Caco-2 (cell line): ENCODE measurements at regions of chr16 and their contacts with region 1.

Region 1: GRCh38 chr16:67521095-67521804 is 7.4 kb upstream of the RIPOR1 start:
- DNase-seq: peak; percentile 97 to 98
- H3K4me3 ChIP-seq: peak overlapping the region; percentile 53
- H3K4me3 Mint-ChIP-seq: peak overlapping the region; percentile 80
- H3K27ac Mint-ChIP-seq: peak overlapping the region; percentile 89
- H3K4me1 ChIP-seq: peaks cover 24% of the 10 kb centered on the region
- H3K4me1 Mint-ChIP-seq: peaks cover 32% of the 10 kb centered on the region
- H3K27me3 ChIP-seq: no peaks in the 10 kb centered on the region
- H3K27me3 Mint-ChIP-seq: no peaks in the 10 kb centered on the region
- CTCF ChIP-seq: peak; percentile 86 to 100

Region 2: GRCh38 chr16:67490335-67491096 is 30.7 kb before region 1 on chr16:
- CTCF ChIA-PET with region 1: interaction called, 42 read pairs
- POLR2A ChIA-PET with region 1: interaction called, 5 read pairs
- intact Hi-C with region 1: no loop called
- DNase-seq: no peak
- H3K4me3 ChIP-seq: no peak overlapping the region
- H3K4me3 Mint-ChIP-seq: no peak overlapping the region
- H3K27ac Mint-ChIP-seq: no peak overlapping the region
- H3K4me1 ChIP-seq: peaks cover 22% of the 10 kb centered on the region
- H3K4me1 Mint-ChIP-seq: peaks cover 23% of the 10 kb centered on the region
- H3K27me3 ChIP-seq: no peaks in the 10 kb centered on the region
- H3K27me3 Mint-ChIP-seq: no peaks in the 10 kb centered on the region
- CTCF ChIP-seq: no peak

Region 3: DNA sequence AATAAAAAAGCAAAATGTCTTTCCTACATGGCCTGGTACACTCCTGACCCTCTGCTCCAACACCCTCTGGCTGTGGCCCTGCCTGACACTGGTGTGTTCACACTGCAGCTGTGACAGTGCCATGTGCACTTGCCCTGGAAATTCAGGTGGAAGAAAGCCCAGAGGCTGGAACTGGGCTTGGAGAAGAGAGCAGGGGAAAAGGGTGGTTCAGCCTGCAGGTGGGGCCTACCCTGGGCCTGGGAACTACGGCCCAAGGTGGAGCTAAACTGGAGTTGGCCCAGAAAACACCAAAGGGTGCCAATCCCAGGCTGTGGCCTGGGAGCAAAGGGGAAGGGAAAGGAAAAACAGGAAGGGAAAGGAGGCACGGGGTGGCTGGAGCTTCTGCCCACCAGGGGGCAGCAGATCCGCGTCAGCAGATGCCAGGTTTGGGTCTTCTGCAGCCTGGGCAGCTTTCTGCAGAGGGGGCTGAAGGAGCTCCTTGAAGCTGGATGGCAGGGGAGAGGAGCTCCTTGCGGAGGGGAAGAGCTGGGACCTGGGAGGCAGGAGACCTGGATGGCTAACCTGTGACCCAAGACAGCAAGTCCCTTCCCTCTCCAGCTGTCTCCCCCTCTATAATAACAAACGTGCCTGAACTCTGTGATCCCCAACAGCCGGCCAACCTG is 25.6 kb after region 1 on chr16:
- CTCF ChIA-PET with region 1: interaction called, 74 read pairs
- POLR2A ChIA-PET with region 1: no interaction called
- intact Hi-C with region 1: loop called (anchors 1 kb)
- DNase-seq: peak; percentile 78 to 90
- H3K4me3 ChIP-seq: no peak overlapping the region
- H3K4me3 Mint-ChIP-seq: no peak overlapping the region
- H3K27ac Mint-ChIP-seq: peak overlapping the region; percentile 68
- H3K4me1 ChIP-seq: no peaks in the 10 kb centered on the region
- H3K4me1 Mint-ChIP-seq: peaks cover 5% of the 10 kb centered on the region
- H3K27me3 ChIP-seq: no peaks in the 10 kb centered on the region; the same call in 1 of the 2 replicates
- H3K27me3 Mint-ChIP-seq: no peaks in the 10 kb centered on the region
- CTCF ChIP-seq: peak; percentile 95 to 98

Region 4: GRCh38 chr16:67641779-67642708 is 120.8 kb after region 1 on chr16:
- CTCF ChIA-PET with region 1: interaction called, 45 read pairs
- POLR2A ChIA-PET with region 1: no interaction called
- intact Hi-C with region 1: loop called (anchors 2 kb)
- DNase-seq: no peak
- H3K4me3 ChIP-seq: no peak overlapping the region
- H3K4me3 Mint-ChIP-seq: no peak overlapping the region
- H3K27ac Mint-ChIP-seq: no peak overlapping the region
- H3K4me1 ChIP-seq: peaks cover 4% of the 10 kb centered on the region; the same call in 1 of the 2 replicates
- H3K4me1 Mint-ChIP-seq: no peaks in the 10 kb centered on the region
- H3K27me3 ChIP-seq: no peaks in the 10 kb centered on the region
- H3K27me3 Mint-ChIP-seq: no peaks in the 10 kb centered on the region
- CTCF ChIP-seq: no peak

Region 5: GRCh38 chr16:67667817-67668494 is 146.7 kb after region 1 on chr16:
- CTCF ChIA-PET with region 1: interaction called, 60 read pairs
- POLR2A ChIA-PET with region 1: no interaction called
- intact Hi-C with region 1: loop called (anchors 1 kb)
- DNase-seq: peak; percentile 88
- H3K4me3 ChIP-seq: no peak overlapping the region
- H3K4me3 Mint-ChIP-seq: peak overlapping the region; percentile 26
- H3K27ac Mint-ChIP-seq: no peak overlapping the region
- H3K4me1 ChIP-seq: peaks cover 4% of the 10 kb centered on the region
- H3K4me1 Mint-ChIP-seq: no peaks in the 10 kb centered on the region
- H3K27me3 ChIP-seq: no peaks in the 10 kb centered on the region
- H3K27me3 Mint-ChIP-seq: no peaks in the 10 kb centered on the region
- CTCF ChIP-seq: peak; percentile 72 to 95

Region 6: DNA sequence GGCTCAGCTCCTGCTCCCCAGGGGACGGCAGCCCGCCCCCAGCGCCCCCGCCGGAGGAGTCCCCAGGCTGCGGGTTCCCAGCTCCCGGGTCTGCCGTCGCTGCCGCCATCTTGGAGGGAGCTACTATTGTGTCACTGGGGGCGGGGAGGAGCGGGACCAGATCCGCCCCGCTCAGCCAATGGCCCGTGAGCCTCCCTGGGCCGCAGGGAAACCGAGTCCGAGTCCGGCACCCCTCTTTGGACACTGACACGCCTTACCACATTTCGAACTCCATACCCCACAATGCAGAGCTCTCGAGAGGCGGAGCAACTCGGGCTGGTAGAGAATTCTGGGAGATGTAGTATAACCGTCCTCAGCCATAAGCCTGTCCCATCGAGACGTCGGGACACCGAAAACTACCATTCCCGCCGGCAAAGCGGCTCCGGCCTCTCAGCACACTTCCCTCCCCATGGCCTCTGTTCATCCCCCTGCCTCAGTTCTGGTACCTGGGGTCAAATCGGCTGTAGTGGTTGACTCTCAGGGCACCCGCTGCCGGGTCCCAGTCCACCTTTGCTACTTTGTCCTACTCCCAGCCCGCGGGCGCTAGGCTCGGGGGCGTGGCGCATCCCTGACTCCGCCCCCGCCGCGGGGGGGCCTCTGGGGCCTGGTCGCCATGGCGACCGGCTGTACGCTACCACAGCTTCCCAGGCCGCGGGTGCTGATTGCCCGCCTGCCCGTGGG is 285.3 kb after region 1 on chr16 and contains the starts of genes RANBP10 and TSNAXIP1:
- CTCF ChIA-PET with region 1: interaction called, 17 read pairs
- POLR2A ChIA-PET with region 1: no interaction called
- intact Hi-C with region 1: loop called (anchors 10 kb)
- DNase-seq: peak; percentile 99
- H3K4me3 ChIP-seq: peak within 1 kb of the TSS; percentile 88
- H3K4me3 Mint-ChIP-seq: peak within 1 kb of the TSS; percentile 83
- H3K27ac Mint-ChIP-seq: peak within 1 kb of the TSS; percentile 81
- H3K4me1 ChIP-seq: peaks cover 10% of the 10 kb centered on the region; the same call in 1 of the 2 replicates
- H3K4me1 Mint-ChIP-seq: peaks cover 9% of the 10 kb centered on the region
- H3K27me3 ChIP-seq: no peaks in the 10 kb centered on the region
- H3K27me3 Mint-ChIP-seq: no peaks in the 10 kb centered on the region
- CTCF ChIP-seq: no peak
- total RNA-seq, gene RANBP10: 21.8 and 23.8 TPM in 2 replicates
- total RNA-seq, gene TSNAXIP1: 0.84 and 0.91 TPM in 2 replicates